T-cell (primary cell): ENCODE measurements at regions of chr2 and their contacts with region 1.

Region 1: GRCh38 chr2:85813982-85814801 is 60.4 kb downstream of the ATOH8 start:
- DNase-seq: peak; percentile 48 to 86 (median 72)
- ATAC-seq: peak; percentile 69 to 84 (median 81)
- H3K4me3 ChIP-seq: no peak overlapping the region
- H3K4me3 Mint-ChIP-seq: no peak overlapping the region
- H3K27ac ChIP-seq: no peak overlapping the region
- H3K27ac Mint-ChIP-seq: no peak overlapping the region
- H3K4me1 ChIP-seq: peaks cover 0 to 3% of the 10 kb centered on the region in 2 experiments
- H3K4me1 Mint-ChIP-seq: peaks cover 2 to 8% (median 4%) of the 10 kb centered on the region in 3 donors
- H3K27me3 ChIP-seq: peaks cover 0 to 38% of the 10 kb centered on the region in 2 experiments
- H3K27me3 Mint-ChIP-seq: peaks cover 10 to 21% of the 10 kb centered on the region in 2 donors

Region 2: GRCh38 chr2:85728883-85729824 is 85.0 kb before region 1 on chr2:
- CTCF ChIA-PET with region 1: interaction called, 4 to 10 read pairs
- POLR2A ChIA-PET with region 1: no interaction called
- DNase-seq: peak; percentile 28 to 77 (median 61)
- ATAC-seq: peak; percentile 76 to 86 (median 81)
- H3K4me3 ChIP-seq: no peak overlapping the region
- H3K4me3 Mint-ChIP-seq: no peak overlapping the region
- H3K27ac ChIP-seq: no peak overlapping the region
- H3K27ac Mint-ChIP-seq: peak overlapping the region in 1 of 2 donors; percentile 24
- H3K4me1 ChIP-seq: peaks cover 0 to 6% of the 10 kb centered on the region in 2 experiments
- H3K4me1 Mint-ChIP-seq: peaks cover 0 to 6% (median 2%) of the 10 kb centered on the region in 3 donors
- H3K27me3 ChIP-seq: peaks cover 0 to 19% of the 10 kb centered on the region in 2 experiments
- H3K27me3 Mint-ChIP-seq: peaks cover 0 to 21% of the 10 kb centered on the region in 2 donors

Region 3: DNA sequence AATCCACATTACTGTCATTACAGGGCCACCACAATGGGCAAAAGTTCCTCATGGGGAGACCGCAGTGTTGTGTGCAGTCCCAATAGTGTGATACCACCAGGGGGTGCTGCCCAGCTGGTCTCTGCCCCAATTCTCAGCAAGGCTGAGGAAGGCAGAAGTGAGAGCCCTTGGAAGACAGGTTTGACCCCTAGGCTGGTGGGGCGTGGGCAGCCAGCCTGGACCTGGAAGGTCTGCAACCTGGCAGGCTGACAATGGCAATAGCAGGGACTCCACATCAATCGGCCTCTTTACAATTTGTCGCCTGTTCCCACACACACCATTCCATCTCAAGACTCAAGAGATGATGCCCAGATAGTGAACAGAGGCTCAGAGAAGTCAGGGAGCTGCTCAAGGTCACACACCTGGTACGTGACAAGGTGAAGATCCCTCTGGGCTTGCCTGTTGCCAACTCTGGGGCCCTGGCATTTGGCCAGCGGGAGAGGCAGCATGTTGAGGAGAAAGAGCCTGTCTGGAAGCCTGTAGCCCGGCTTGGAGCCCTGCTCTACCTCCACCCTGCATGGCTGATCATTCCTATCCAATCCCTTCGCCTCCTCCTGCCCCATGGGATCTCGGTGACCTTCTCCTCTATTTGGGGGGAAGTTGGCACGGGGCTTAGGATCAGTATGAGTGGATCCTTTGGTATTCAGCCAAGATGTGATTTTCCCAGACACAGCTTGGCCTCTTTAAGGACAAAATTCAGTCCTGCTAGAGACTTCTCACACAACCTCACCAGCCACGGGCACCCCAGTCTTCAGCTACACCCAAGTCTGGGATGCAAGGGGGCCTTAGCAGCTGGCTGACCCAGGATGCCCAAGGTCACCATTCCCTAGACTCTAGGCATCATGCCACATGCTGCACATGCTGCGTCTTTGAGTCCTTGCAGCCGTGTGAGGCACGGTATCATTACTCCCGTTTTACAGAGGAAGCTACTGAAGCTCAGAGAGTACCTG is 63.3 kb before region 1 on chr2:
- CTCF ChIA-PET with region 1: interaction called in 1 of 2 experiments, 14 read pairs
- POLR2A ChIA-PET with region 1: no interaction called
- DNase-seq: peak in 33 of 35 experiments; percentile 10 to 67 (median 43)
- ATAC-seq: peak in 3 of 4 experiments; percentile 53 to 63 (median 53)
- H3K4me3 ChIP-seq: no peak overlapping the region
- H3K4me3 Mint-ChIP-seq: no peak overlapping the region
- H3K27ac ChIP-seq: no peak overlapping the region
- H3K27ac Mint-ChIP-seq: no peak overlapping the region
- H3K4me1 ChIP-seq: peaks cover 5 to 28% of the 10 kb centered on the region in 2 experiments
- H3K4me1 Mint-ChIP-seq: peaks cover 15 to 22% (median 17%) of the 10 kb centered on the region in 3 donors
- H3K27me3 ChIP-seq: peaks cover 2 to 84% of the 10 kb centered on the region in 2 experiments
- H3K27me3 Mint-ChIP-seq: peaks cover 44 to 63% of the 10 kb centered on the region in 2 donors